Activated B cell treated with CpG ODN at 0.5 μM for 24 hours (primary cell): ENCODE measurements at regions of chr22 and their contacts with region 1.

Region 1: DNA sequence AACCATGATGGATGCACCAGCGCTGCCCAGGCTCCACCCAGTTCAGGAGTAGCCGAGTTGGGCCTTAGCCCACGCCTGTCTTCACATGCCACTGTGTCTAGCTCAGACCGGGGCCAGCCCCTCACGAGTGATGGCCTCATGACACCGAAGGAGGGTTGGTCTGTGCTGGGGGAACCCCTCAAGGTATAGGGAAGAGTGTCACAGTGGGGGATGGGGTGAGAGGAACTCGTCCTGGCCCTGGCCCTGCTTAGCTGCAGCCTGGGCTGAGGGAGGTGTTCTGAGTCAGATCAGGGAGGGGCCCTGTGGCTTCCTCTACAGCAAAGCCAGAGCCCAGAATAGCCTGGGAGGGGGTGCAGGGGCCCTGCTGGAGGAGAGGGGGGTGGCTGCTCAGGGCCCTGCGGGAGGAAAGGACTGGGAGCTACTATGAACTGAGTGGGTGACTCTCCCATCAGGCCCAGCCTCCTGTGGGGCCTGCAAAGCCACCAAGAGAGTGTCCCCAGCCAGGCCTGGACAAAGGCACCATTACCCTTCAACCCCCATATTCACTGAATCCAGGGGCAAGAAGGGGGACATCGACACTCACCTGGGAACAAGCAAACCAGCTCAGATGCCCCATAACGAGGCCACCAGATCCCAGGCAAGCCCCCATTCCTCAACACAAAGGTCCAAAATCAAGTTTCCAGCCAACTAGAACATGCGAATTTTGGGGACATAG is 41.2 kb downstream of the IGLL5 start:
- DNase-seq: peak; percentile 71
- ATAC-seq: peak; percentile 91
- H3K4me3 Mint-ChIP-seq: peak overlapping the region; percentile 56
- H3K27ac Mint-ChIP-seq: peak overlapping the region; percentile 96
- H3K4me1 Mint-ChIP-seq: peaks cover 100% of the 10 kb centered on the region
- H3K27me3 Mint-ChIP-seq: no peaks in the 10 kb centered on the region
- CTCF ChIP-seq: no peak

Region 2: GRCh38 chr22:22855617-22856308 is 73.1 kb before region 1 on chr22:
- CTCF ChIA-PET with region 1: interaction called, 4 read pairs
- POLR2A ChIA-PET with region 1: interaction called, 15 read pairs
- intact Hi-C with region 1: no loop called
- DNase-seq: peak; percentile 53
- ATAC-seq: peak; percentile 79
- H3K4me3 Mint-ChIP-seq: no peak overlapping the region
- H3K27ac Mint-ChIP-seq: peak overlapping the region; percentile 4
- H3K4me1 Mint-ChIP-seq: peaks cover 35% of the 10 kb centered on the region
- H3K27me3 Mint-ChIP-seq: peaks cover 10% of the 10 kb centered on the region
- CTCF ChIP-seq: no peak

Region 3: GRCh38 chr22:22865311-22866072 is 63.3 kb before region 1 on chr22:
- CTCF ChIA-PET with region 1: no interaction called
- POLR2A ChIA-PET with region 1: interaction called, 11 read pairs
- intact Hi-C with region 1: no loop called
- DNase-seq: no peak
- ATAC-seq: peak; percentile 83
- H3K4me3 Mint-ChIP-seq: no peak overlapping the region
- H3K27ac Mint-ChIP-seq: peak overlapping the region; percentile 36
- H3K4me1 Mint-ChIP-seq: peaks cover 48% of the 10 kb centered on the region
- H3K27me3 Mint-ChIP-seq: peaks cover 4% of the 10 kb centered on the region
- CTCF ChIP-seq: no peak

Region 4: DNA sequence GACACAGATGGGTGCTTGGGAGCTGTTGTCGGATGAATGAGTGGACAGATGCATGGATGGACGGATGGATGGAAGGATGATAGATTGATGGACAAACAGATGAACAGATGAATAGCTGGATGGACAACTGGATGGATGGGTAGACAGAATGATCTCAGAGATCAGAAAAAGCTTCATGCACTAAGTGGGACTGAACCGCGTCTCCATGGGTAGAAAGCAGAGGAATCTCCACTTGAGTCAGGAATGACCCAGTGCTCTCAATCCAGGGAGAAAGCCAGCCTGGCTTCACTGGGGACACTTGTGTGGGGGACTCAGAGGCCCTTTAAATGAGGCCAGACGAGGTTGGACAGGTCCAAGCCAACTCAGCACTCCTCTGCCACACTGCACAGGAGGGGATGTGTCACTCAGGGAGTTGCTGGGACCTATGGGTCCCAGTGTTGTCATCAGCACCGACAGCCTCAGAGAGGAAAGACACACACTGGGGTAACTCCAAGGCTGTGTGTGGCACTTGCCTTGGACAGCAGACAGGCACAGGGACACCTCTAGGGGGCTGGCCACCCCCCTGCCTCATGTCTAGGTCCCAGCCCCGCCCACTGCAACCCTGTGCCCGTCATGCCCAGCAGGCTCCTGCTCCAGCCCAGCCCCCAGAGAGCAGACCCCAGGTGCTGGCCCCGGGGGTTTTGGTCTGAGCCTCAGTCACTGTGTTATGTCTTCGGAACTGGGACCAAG is 35.6 kb before region 1 on chr22:
- CTCF ChIA-PET with region 1: interaction called, 4 read pairs
- POLR2A ChIA-PET with region 1: interaction called, 701 read pairs
- intact Hi-C with region 1: no loop called
- DNase-seq: peak; percentile 27
- ATAC-seq: peak; percentile 53
- H3K4me3 Mint-ChIP-seq: peak overlapping the region; percentile 75
- H3K27ac Mint-ChIP-seq: peak overlapping the region; percentile 82
- H3K4me1 Mint-ChIP-seq: peaks cover 77% of the 10 kb centered on the region
- H3K27me3 Mint-ChIP-seq: peaks cover 8% of the 10 kb centered on the region
- CTCF ChIP-seq: no peak

Region 5: GRCh38 chr22:22903355-22903777 is 25.5 kb before region 1 on chr22:
- CTCF ChIA-PET with region 1: interaction called, 11 read pairs
- POLR2A ChIA-PET with region 1: interaction called, 427 read pairs
- intact Hi-C with region 1: loop called (anchors 1 kb)
- DNase-seq: no peak
- ATAC-seq: no peak
- H3K4me3 Mint-ChIP-seq: peak overlapping the region; percentile 87
- H3K27ac Mint-ChIP-seq: peak overlapping the region; percentile 76
- H3K4me1 Mint-ChIP-seq: peaks cover 66% of the 10 kb centered on the region
- H3K27me3 Mint-ChIP-seq: no peaks in the 10 kb centered on the region
- CTCF ChIP-seq: no peak

Region 6: DNA sequence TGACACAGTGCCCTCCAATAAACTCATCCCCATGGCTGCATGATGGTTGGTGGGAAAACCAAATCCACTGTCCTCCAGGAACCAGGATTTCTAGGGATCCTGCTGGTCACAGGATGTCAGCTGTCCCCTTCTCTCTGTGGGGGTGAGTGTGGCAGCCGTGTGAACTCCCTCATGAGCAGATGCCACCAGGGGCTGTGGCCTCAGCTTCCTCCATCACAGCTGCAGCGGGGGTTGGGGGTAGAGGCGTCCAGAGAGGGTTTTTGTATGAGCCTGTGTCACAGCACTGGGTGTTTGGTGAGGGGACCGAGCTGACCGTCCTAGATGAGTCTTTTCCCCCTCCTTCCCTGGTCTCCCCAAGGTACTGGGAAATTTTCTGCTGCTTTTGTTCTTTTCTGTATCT is 14.8 kb before region 1 on chr22:
- CTCF ChIA-PET with region 1: interaction called, 6 read pairs
- POLR2A ChIA-PET with region 1: interaction called, 151 read pairs
- intact Hi-C with region 1: loop called (anchors 1 kb)
- DNase-seq: no peak
- ATAC-seq: peak; percentile 73
- H3K4me3 Mint-ChIP-seq: peak overlapping the region; percentile 58
- H3K27ac Mint-ChIP-seq: peak overlapping the region; percentile 85
- H3K4me1 Mint-ChIP-seq: peaks cover 88% of the 10 kb centered on the region
- H3K27me3 Mint-ChIP-seq: no peaks in the 10 kb centered on the region
- CTCF ChIP-seq: no peak

Region 7: DNA sequence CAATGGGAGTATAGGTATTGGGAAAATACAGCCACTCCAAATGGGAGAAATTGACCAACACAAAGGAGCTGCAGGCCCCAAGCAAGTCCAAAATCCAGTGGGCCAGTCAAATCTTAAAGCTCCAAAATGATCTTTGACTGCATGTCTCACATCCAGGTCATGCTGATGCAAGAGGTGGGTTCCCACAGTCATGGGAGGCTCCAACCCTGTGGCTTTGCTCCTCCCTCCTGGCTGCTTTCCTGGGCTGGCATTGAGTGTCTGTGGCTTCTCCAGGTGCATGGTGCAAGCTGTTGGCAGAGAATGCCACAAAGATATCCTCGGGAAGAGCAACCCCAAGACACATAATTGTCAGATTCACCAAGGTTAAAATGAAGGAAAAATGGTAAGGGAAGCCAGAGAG is 39.5 kb after region 1 on chr22:
- CTCF ChIA-PET with region 1: no interaction called
- POLR2A ChIA-PET with region 1: no interaction called
- intact Hi-C with region 1: no loop called
- DNase-seq: no peak
- ATAC-seq: no peak
- H3K4me3 Mint-ChIP-seq: no peak overlapping the region
- H3K27ac Mint-ChIP-seq: no peak overlapping the region
- H3K4me1 Mint-ChIP-seq: peaks cover 8% of the 10 kb centered on the region
- H3K27me3 Mint-ChIP-seq: peaks cover 36% of the 10 kb centered on the region
- CTCF ChIP-seq: no peak

Region 8: GRCh38 chr22:23431337-23432072 is 502.7 kb after region 1 on chr22:
- CTCF ChIA-PET with region 1: no interaction called
- POLR2A ChIA-PET with region 1: no interaction called
- intact Hi-C with region 1: no loop called
- DNase-seq: no peak
- ATAC-seq: no peak
- H3K4me3 Mint-ChIP-seq: no peak overlapping the region
- H3K27ac Mint-ChIP-seq: no peak overlapping the region
- H3K4me1 Mint-ChIP-seq: peaks cover 14% of the 10 kb centered on the region
- H3K27me3 Mint-ChIP-seq: peaks cover 2% of the 10 kb centered on the region
- CTCF ChIP-seq: no peak